ENCODE measurements at regions of chr3 and their contacts with region 1.

Region 1: DNA sequence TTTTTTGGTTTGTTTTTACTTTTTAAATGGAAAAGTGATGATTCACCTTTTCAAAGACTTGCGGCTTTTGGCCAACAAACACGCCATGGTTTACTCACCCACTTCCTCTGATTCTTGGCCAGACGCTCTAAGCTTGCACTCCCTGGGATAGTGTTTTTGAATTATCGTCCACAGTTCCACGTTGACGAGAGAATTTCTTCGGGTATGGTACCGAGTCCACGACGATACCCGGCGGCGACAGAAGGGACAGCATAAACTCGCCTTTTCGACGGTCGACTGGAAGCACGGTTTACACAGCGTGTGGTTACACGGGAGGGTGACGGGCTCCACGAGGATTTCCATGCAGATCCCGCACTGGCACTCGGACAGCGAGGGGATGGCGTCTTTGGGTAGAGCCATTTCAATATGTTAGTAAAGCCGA is 783 bp downstream of the RNF168 start:
- DNase-seq: peak; percentile 77
- H3K4me3 Mint-ChIP-seq: peak overlapping the region; percentile 88
- H3K27ac Mint-ChIP-seq: peak overlapping the region; percentile 93
- H3K4me1 Mint-ChIP-seq: peaks cover 33% of the 10 kb centered on the region
- H3K27me3 Mint-ChIP-seq: no peaks in the 10 kb centered on the region

Region 2: GRCh38 chr3:196081791-196082618 is 420.8 kb before region 1 on chr3 and contains the start of gene TFRC:
- CTCF ChIA-PET with region 1: no interaction called
- intact Hi-C with region 1: loop called (anchors 1 kb)
- DNase-seq: peak; percentile 96
- H3K4me3 Mint-ChIP-seq: peak within 1 kb of the TSS; percentile 97
- H3K27ac Mint-ChIP-seq: peak within 1 kb of the TSS; percentile 93
- H3K4me1 Mint-ChIP-seq: peaks cover 36% of the 10 kb centered on the region
- H3K27me3 Mint-ChIP-seq: no peaks in the 10 kb centered on the region
- total RNA-seq, gene TFRC: 436 to 442 TPM

Region 3: GRCh38 chr3:196274585-196274984 is 228.2 kb before region 1 on chr3:
- CTCF ChIA-PET with region 1: no interaction called
- intact Hi-C with region 1: loop called (anchors 1 kb)
- DNase-seq: peak; percentile 86
- H3K4me3 Mint-ChIP-seq: peak overlapping the region; percentile 52
- H3K27ac Mint-ChIP-seq: peak overlapping the region; percentile 94
- H3K4me1 Mint-ChIP-seq: peaks cover 73% of the 10 kb centered on the region
- H3K27me3 Mint-ChIP-seq: no peaks in the 10 kb centered on the region

Region 4: GRCh38 chr3:196432137-196432879 is 70.5 kb before region 1 on chr3 and contains the start of gene UBXN7:
- CTCF ChIA-PET with region 1: no interaction called
- intact Hi-C with region 1: loop called (anchors 1 kb)
- DNase-seq: peak; percentile 97
- H3K4me3 Mint-ChIP-seq: peak within 1 kb of the TSS; percentile 69
- H3K27ac Mint-ChIP-seq: peak within 1 kb of the TSS; percentile 93
- H3K4me1 Mint-ChIP-seq: peaks cover 15% of the 10 kb centered on the region
- H3K27me3 Mint-ChIP-seq: no peaks in the 10 kb centered on the region
- total RNA-seq, gene UBXN7: 54.2 to 62.5 TPM

Region 5: GRCh38 chr3:196632046-196632751 is 129.4 kb after region 1 on chr3:
- CTCF ChIA-PET with region 1: no interaction called
- intact Hi-C with region 1: loop called (anchors 1 kb)
- DNase-seq: peak; percentile 90
- H3K4me3 Mint-ChIP-seq: peak overlapping the region; percentile 88
- H3K27ac Mint-ChIP-seq: peak overlapping the region; percentile 97
- H3K4me1 Mint-ChIP-seq: peaks cover 48% of the 10 kb centered on the region
- H3K27me3 Mint-ChIP-seq: no peaks in the 10 kb centered on the region

Region 6: GRCh38 chr3:196740481-196741249 is 237.9 kb after region 1 on chr3:
- CTCF ChIA-PET with region 1: no interaction called
- intact Hi-C with region 1: no loop called
- DNase-seq: peak; percentile 71
- H3K4me3 Mint-ChIP-seq: peak overlapping the region; percentile 100
- H3K27ac Mint-ChIP-seq: peak overlapping the region; percentile 98
- H3K4me1 Mint-ChIP-seq: peaks cover 18% of the 10 kb centered on the region
- H3K27me3 Mint-ChIP-seq: no peaks in the 10 kb centered on the region

Measured in activated naive CD4-positive, alpha-beta T cell treated with anti-CD3 and anti-CD28 coated beads for 36 hours (primary cell).